MCF 10A (cell line): ENCODE measurements at regions of chr16 and their contacts with region 1.

Region 1: GRCh38 chr16:19086322-19087199 is 19.1 kb downstream of the COQ7 start:
- DNase-seq: peak; percentile 85
- H3K4me3 Mint-ChIP-seq: peak overlapping the region; percentile 54
- H3K27ac Mint-ChIP-seq: no peak overlapping the region
- H3K4me1 Mint-ChIP-seq: peaks cover 6% of the 10 kb centered on the region
- H3K27me3 Mint-ChIP-seq: no peaks in the 10 kb centered on the region
- CTCF ChIP-seq: peak; percentile 97

Region 2: GRCh38 chr16:18945233-18945632 is 141.3 kb before region 1 on chr16:
- CTCF ChIA-PET with region 1: no interaction called
- POLR2A ChIA-PET with region 1: no interaction called
- intact Hi-C with region 1: no loop called
- DNase-seq: no peak
- H3K4me3 Mint-ChIP-seq: no peak overlapping the region
- H3K27ac Mint-ChIP-seq: no peak overlapping the region
- H3K4me1 Mint-ChIP-seq: no peaks in the 10 kb centered on the region
- H3K27me3 Mint-ChIP-seq: no peaks in the 10 kb centered on the region
- CTCF ChIP-seq: no peak

Region 3: DNA sequence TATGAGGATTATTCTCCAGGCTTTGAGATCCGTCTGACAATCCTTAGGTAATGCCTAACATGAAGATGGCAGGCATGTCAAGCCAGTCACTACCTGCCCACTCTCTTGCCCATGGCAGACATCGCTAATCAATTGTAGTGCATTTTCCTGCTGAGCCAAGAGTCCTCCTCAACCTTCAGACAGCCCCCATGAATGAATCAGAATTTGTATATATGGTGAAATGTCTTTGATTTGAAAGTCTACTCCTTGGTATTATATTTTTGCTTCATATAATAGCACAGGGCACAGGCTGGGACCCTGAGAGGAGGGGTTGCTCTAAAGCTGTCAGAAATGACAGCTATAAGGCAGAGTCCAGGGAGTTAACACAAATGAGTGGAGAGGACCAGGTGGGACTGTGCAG is 46.2 kb before region 1 on chr16:
- CTCF ChIA-PET with region 1: no interaction called
- POLR2A ChIA-PET with region 1: no interaction called
- intact Hi-C with region 1: no loop called
- DNase-seq: no peak
- H3K4me3 Mint-ChIP-seq: no peak overlapping the region
- H3K27ac Mint-ChIP-seq: no peak overlapping the region
- H3K4me1 Mint-ChIP-seq: no peaks in the 10 kb centered on the region
- H3K27me3 Mint-ChIP-seq: no peaks in the 10 kb centered on the region
- CTCF ChIP-seq: no peak

Region 4: DNA sequence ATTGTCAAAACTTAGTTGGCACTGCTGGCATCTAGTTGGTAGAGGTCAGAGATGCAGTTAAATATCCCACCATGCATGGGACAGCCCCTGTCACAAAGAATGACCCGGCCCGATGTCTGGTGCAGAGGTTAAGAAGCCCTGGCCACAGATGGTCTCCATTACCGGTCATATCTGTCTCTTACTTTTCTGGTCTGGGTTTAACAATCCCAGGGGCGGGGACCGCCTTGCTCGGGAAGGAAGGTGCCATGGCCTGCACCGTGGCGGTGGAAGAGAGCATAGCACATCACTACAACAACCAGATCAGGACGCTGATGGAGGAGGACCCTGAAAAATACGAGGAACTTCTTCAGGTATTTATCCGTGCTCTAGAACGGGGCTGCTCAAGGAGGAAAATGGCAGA is 11.1 kb before region 1 on chr16:
- CTCF ChIA-PET with region 1: interaction called, 13 read pairs
- POLR2A ChIA-PET with region 1: no interaction called
- intact Hi-C with region 1: no loop called
- DNase-seq: no peak
- H3K4me3 Mint-ChIP-seq: no peak overlapping the region
- H3K27ac Mint-ChIP-seq: no peak overlapping the region
- H3K4me1 Mint-ChIP-seq: peaks cover 6% of the 10 kb centered on the region
- H3K27me3 Mint-ChIP-seq: no peaks in the 10 kb centered on the region
- CTCF ChIP-seq: no peak

Region 5: DNA sequence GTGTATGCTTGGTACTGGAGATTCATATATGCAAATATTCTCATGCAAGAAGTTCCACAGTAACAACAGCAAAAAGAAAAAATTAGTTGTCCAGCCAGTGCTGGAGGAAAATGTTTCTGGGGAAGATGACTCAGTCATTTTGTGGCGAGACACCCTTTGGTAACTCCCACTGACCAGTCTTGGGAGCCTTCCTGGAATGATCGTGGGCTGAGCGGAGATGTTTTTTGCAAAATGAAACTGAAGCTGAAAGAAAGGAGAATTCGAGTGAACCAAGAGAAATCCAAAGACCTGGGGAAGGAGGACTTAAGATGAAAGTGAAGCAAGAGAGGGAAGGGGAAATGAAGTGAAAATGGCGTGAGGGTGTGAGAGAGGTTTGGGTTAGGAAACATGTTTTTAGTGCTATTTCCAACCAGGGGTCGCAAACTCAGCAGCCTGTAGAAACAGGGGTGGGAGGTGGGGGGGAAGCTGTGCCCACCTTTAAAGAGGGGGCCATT is 32.4 kb after region 1 on chr16:
- CTCF ChIA-PET with region 1: interaction called, 12 read pairs
- POLR2A ChIA-PET with region 1: no interaction called
- intact Hi-C with region 1: no loop called
- DNase-seq: peak; percentile 90
- H3K4me3 Mint-ChIP-seq: peak overlapping the region; percentile 76
- H3K27ac Mint-ChIP-seq: peak overlapping the region; percentile 93
- H3K4me1 Mint-ChIP-seq: peaks cover 43% of the 10 kb centered on the region
- H3K27me3 Mint-ChIP-seq: no peaks in the 10 kb centered on the region
- CTCF ChIP-seq: no peak

Region 6: GRCh38 chr16:19167710-19168370 is 81.3 kb after region 1 on chr16 and contains the start of gene SYT17:
- CTCF ChIA-PET with region 1: interaction called, 8 read pairs
- POLR2A ChIA-PET with region 1: no interaction called
- intact Hi-C with region 1: loop called (anchors 1 kb)
- DNase-seq: peak; percentile 59
- H3K4me3 Mint-ChIP-seq: peak within 1 kb of the TSS; percentile 46
- H3K27ac Mint-ChIP-seq: no peak within 1 kb of the TSS
- H3K4me1 Mint-ChIP-seq: no peaks in the 10 kb centered on the region
- H3K27me3 Mint-ChIP-seq: peaks cover 28% of the 10 kb centered on the region
- CTCF ChIP-seq: peak; percentile 82
- total RNA-seq, gene SYT17: not detected in 2 replicates

Region 7: DNA sequence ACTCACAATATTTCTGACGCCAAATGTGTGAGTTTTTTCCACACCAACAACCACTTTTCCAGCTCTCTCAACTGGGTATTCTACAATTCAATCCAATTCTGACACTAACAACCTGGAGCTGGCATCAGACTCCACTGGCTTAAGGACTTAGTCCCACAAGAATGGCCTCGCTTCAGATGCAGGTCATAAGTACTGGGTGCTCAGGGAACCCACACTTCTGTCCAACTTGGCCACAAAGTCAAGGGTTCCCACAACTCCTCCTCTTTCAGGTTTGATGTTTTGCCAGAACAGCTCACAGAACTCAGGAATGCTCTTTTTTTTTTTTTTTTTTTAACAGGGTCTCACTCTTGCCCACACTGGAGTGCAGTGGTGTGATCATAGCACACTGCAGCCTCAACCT is 275.0 kb after region 1 on chr16:
- CTCF ChIA-PET with region 1: interaction called, 34 read pairs
- POLR2A ChIA-PET with region 1: no interaction called
- intact Hi-C with region 1: no loop called
- DNase-seq: no peak
- H3K4me3 Mint-ChIP-seq: no peak overlapping the region
- H3K27ac Mint-ChIP-seq: no peak overlapping the region
- H3K4me1 Mint-ChIP-seq: no peaks in the 10 kb centered on the region
- H3K27me3 Mint-ChIP-seq: no peaks in the 10 kb centered on the region
- CTCF ChIP-seq: no peak

Region 8: GRCh38 chr16:19382887-19383816 is 296.6 kb after region 1 on chr16:
- CTCF ChIA-PET with region 1: interaction called, 154 read pairs
- POLR2A ChIA-PET with region 1: interaction called, 4 read pairs
- intact Hi-C with region 1: no loop called
- DNase-seq: no peak
- H3K4me3 Mint-ChIP-seq: no peak overlapping the region
- H3K27ac Mint-ChIP-seq: no peak overlapping the region
- H3K4me1 Mint-ChIP-seq: peaks cover 7% of the 10 kb centered on the region
- H3K27me3 Mint-ChIP-seq: no peaks in the 10 kb centered on the region
- CTCF ChIP-seq: no peak

Region 9: GRCh38 chr16:19502395-19503131 is 416.0 kb after region 1 on chr16:
- CTCF ChIA-PET with region 1: interaction called, 55 read pairs
- POLR2A ChIA-PET with region 1: interaction called, 3 read pairs
- intact Hi-C with region 1: loop called (anchors 1 kb)
- DNase-seq: peak; percentile 79
- H3K4me3 Mint-ChIP-seq: no peak overlapping the region
- H3K27ac Mint-ChIP-seq: no peak overlapping the region
- H3K4me1 Mint-ChIP-seq: peaks cover 17% of the 10 kb centered on the region
- H3K27me3 Mint-ChIP-seq: no peaks in the 10 kb centered on the region
- CTCF ChIP-seq: peak; percentile 77